CD8-positive, alpha-beta T cell (primary cell): ENCODE measurements at regions of chr16 and their contacts with region 1.

Region 1: GRCh38 chr16:48385272-48386150 is at the start of gene SIAH1:
- DNase-seq: peak; percentile 77 to 94 (median 89)
- ATAC-seq: peak; percentile 84
- H3K4me3 ChIP-seq: peak within 1 kb of the TSS; percentile 63 to 74
- H3K4me3 Mint-ChIP-seq: peak within 1 kb of the TSS; percentile 86
- H3K27ac ChIP-seq: peak within 1 kb of the TSS; percentile 54 to 68
- H3K27ac Mint-ChIP-seq: peak within 1 kb of the TSS; percentile 82
- H3K4me1 ChIP-seq: peaks cover 13% of the 10 kb centered on the region
- H3K4me1 Mint-ChIP-seq: peaks cover 25% of the 10 kb centered on the region
- H3K27me3 ChIP-seq: no peaks in the 10 kb centered on the region
- H3K27me3 Mint-ChIP-seq: no peaks in the 10 kb centered on the region
- CTCF ChIP-seq: no peak
- total RNA-seq, gene SIAH1: 28.1 to 34.8 TPM

Region 2: DNA sequence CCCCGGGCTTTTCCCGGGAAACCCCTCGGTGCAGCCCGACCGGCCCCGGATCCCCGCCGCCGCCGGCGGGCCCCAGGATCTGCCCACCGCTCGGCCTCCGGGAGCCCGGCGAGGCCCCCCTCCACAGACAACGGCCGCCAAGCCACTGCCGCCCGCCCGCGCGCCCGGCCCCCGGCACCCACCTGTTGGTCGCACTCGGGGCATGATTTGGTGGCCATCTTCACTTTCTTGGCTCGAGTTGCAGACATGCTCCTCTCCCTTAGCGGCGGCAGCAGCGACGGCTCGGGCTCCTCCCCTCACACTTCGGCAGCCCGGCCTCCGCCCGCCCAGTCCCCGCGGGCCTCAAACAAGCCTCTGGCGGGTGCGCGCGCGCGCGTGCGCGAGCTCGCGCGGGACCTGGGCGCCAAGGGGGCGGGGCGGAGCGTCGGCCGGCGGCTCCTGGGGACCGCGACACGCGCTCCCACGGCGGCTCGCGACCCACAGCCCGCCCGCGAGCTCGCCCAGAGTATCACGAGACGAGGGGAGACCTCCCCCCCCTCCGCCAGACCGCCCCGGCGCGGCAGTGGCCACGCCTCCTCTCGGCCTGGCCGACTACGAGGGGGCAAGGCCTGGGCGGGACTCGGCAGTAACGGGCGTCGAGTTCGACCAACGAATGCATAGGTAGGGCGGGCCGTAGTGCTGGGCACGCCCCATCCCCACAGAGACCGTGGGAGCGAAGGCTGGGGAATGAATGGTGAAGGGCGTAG is 1554.4 kb before region 1 on chr16 and contains the start of gene C16orf87:
- CTCF ChIA-PET with region 1: no interaction called
- POLR2A ChIA-PET with region 1: no interaction called
- intact Hi-C with region 1: loop called (anchors 2 to 5 kb)
- DNase-seq: peak; percentile 85 to 96 (median 90)
- ATAC-seq: peak; percentile 92
- H3K4me3 ChIP-seq: peak within 1 kb of the TSS; percentile 61 to 74
- H3K4me3 Mint-ChIP-seq: peak within 1 kb of the TSS; percentile 94
- H3K27ac ChIP-seq: peak within 1 kb of the TSS; percentile 62 to 73
- H3K27ac Mint-ChIP-seq: peak within 1 kb of the TSS; percentile 96
- H3K4me1 ChIP-seq: peaks cover 9% of the 10 kb centered on the region
- H3K4me1 Mint-ChIP-seq: peaks cover 27% of the 10 kb centered on the region
- H3K27me3 ChIP-seq: no peaks in the 10 kb centered on the region
- H3K27me3 Mint-ChIP-seq: no peaks in the 10 kb centered on the region
- CTCF ChIP-seq: no peak
- total RNA-seq, gene C16orf87: 13.9 to 14.0 TPM

Region 3: GRCh38 chr16:47141773-47142485 is 1243.6 kb before region 1 on chr16:
- CTCF ChIA-PET with region 1: no interaction called
- POLR2A ChIA-PET with region 1: no interaction called
- intact Hi-C with region 1: loop called (anchors 5 to 10 kb)
- DNase-seq: peak; percentile 63 to 87 (median 80)
- ATAC-seq: peak; percentile 77
- H3K4me3 ChIP-seq: peak overlapping the region; percentile 3 to 28
- H3K4me3 Mint-ChIP-seq: peak overlapping the region; percentile 76
- H3K27ac ChIP-seq: no peak overlapping the region
- H3K27ac Mint-ChIP-seq: no peak overlapping the region
- H3K4me1 ChIP-seq: peaks cover 12% of the 10 kb centered on the region
- H3K4me1 Mint-ChIP-seq: peaks cover 21% of the 10 kb centered on the region
- H3K27me3 ChIP-seq: peaks cover 3 to 5% of the 10 kb centered on the region in 2 experiments
- H3K27me3 Mint-ChIP-seq: peaks cover 22% of the 10 kb centered on the region
- CTCF ChIP-seq: peak; percentile 85

Region 4: DNA sequence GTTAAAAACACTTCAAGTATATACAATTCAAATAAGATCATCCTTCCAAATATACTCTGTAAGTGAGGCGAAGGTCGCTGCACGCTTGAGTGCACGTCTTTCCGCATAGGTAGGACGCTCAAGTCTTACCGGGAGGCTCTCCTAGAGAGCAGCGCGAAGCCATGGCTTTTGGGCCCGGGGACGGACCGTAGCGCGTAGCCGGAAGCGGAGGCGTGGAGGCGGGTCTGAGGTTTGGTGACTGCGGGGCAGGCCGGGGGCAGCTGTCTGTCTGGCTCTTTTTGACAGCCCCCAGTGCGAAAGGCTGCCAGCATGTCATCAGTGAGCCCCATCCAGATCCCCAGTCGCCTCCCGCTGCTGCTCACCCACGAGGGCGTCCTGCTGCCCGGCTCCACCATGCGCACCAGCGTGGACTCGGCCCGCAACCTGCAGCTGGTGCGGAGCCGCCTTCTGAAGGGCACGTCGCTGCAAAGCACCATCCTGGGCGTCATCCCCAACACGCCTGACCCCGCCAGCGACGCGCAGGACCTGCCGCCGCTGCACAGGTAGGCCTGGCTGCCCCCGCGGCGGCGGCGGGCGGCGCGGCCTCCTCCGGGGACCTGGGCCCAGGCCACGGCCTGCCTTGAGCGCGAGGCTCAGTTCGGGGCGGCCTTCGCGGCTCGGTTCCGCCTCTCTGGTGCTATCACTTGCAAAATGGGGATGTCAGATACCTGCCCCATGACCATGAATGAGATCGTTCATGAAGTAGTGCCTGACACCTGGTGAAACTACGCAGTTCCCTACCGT is 141.2 kb before region 1 on chr16 and contains the start of gene LONP2:
- CTCF ChIA-PET with region 1: no interaction called
- POLR2A ChIA-PET with region 1: no interaction called
- intact Hi-C with region 1: loop called (anchors 1 to 5 kb)
- DNase-seq: peak; percentile 82 to 93 (median 89)
- ATAC-seq: peak; percentile 94
- H3K4me3 ChIP-seq: peak within 1 kb of the TSS; percentile 66 to 88
- H3K4me3 Mint-ChIP-seq: peak within 1 kb of the TSS; percentile 90
- H3K27ac ChIP-seq: peak within 1 kb of the TSS; percentile 75 to 83
- H3K27ac Mint-ChIP-seq: peak within 1 kb of the TSS; percentile 95
- H3K4me1 ChIP-seq: peaks cover 38% of the 10 kb centered on the region
- H3K4me1 Mint-ChIP-seq: peaks cover 50% of the 10 kb centered on the region
- H3K27me3 ChIP-seq: no peaks in the 10 kb centered on the region
- H3K27me3 Mint-ChIP-seq: no peaks in the 10 kb centered on the region
- CTCF ChIP-seq: no peak
- total RNA-seq, gene LONP2: 71.8 to 72.1 TPM

Region 5: GRCh38 chr16:48353565-48354163 is 31.8 kb before region 1 on chr16:
- CTCF ChIA-PET with region 1: interaction called, 7 read pairs
- POLR2A ChIA-PET with region 1: no interaction called
- intact Hi-C with region 1: loop called (anchors 5 kb)
- DNase-seq: peak; percentile 37 to 88 (median 69)
- ATAC-seq: peak; percentile 97
- H3K4me3 ChIP-seq: no peak overlapping the region
- H3K4me3 Mint-ChIP-seq: no peak overlapping the region
- H3K27ac ChIP-seq: no peak overlapping the region
- H3K27ac Mint-ChIP-seq: peak overlapping the region; percentile 18
- H3K4me1 ChIP-seq: peaks cover 3% of the 10 kb centered on the region
- H3K4me1 Mint-ChIP-seq: peaks cover 8% of the 10 kb centered on the region
- H3K27me3 ChIP-seq: no peaks in the 10 kb centered on the region
- H3K27me3 Mint-ChIP-seq: no peaks in the 10 kb centered on the region
- CTCF ChIP-seq: peak; percentile 92

Region 6: DNA sequence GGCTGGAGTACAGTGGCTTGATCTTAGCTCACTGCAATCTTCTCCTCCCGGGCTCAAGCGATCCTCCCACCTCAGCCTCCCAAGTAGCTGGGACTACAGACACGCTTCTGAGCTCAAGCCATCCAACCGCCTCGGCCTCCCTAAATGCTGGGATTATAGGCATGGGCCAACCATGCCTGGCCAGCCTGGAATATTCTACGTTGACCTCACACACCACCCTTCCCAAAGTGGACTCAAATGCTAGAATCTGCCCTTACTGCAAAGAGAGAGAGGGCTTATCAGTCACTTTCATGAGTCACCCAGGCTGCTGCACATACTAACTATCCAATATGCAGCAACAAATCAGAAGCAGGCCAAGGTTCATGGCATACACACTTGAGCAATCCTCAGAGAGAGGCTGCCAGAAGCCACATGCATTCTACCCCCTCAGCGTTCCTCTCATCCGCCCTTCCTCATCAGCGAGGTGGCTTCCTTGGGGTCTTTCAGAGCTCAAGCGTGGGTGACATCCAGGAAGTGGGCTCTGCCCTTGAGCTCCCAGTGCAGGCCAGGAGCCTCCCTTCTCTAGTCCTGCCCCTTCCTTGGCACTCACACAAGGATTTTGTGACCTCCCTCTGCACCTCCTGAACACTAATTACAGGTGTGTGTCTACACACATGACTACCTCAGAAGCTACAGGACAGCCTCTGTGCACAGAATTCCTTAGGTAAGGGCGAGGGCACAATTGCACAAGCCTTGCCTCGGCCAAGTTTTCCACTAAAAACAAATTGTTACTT is 24.5 kb after region 1 on chr16:
- CTCF ChIA-PET with region 1: no interaction called
- POLR2A ChIA-PET with region 1: no interaction called
- intact Hi-C with region 1: no loop called
- DNase-seq: no peak
- ATAC-seq: no peak
- H3K4me3 ChIP-seq: no peak overlapping the region
- H3K4me3 Mint-ChIP-seq: no peak overlapping the region
- H3K27ac ChIP-seq: no peak overlapping the region
- H3K27ac Mint-ChIP-seq: no peak overlapping the region
- H3K4me1 ChIP-seq: no peaks in the 10 kb centered on the region
- H3K4me1 Mint-ChIP-seq: no peaks in the 10 kb centered on the region
- H3K27me3 ChIP-seq: peaks cover 0 to 2% of the 10 kb centered on the region in 2 experiments
- H3K27me3 Mint-ChIP-seq: peaks cover 4% of the 10 kb centered on the region
- CTCF ChIP-seq: no peak

Region 7: GRCh38 chr16:48556913-48557351 is 171.4 kb after region 1 on chr16:
- CTCF ChIA-PET with region 1: no interaction called
- POLR2A ChIA-PET with region 1: no interaction called
- intact Hi-C with region 1: loop called in 1 of 2 experiments (anchors 5 kb)
- DNase-seq: peak in 2 of 9 experiments; percentile 27 to 30
- ATAC-seq: peak; percentile 45
- H3K4me3 ChIP-seq: no peak overlapping the region
- H3K4me3 Mint-ChIP-seq: no peak overlapping the region
- H3K27ac ChIP-seq: no peak overlapping the region
- H3K27ac Mint-ChIP-seq: peak overlapping the region; percentile 38
- H3K4me1 ChIP-seq: peaks cover 47% of the 10 kb centered on the region
- H3K4me1 Mint-ChIP-seq: peaks cover 80% of the 10 kb centered on the region
- H3K27me3 ChIP-seq: no peaks in the 10 kb centered on the region
- H3K27me3 Mint-ChIP-seq: no peaks in the 10 kb centered on the region
- CTCF ChIP-seq: no peak